Right ventricle myocardium superior (tissue), 1 donor: ENCODE measurements at regions of chr2 and their contacts with region 1.

Region 1: GRCh38 chr2:156589381-156590079 is 153.4 kb downstream of the GPD2 start:
- DNase-seq: no peak
- ATAC-seq: peak; percentile 72

Region 2: GRCh38 chr2:156192468-156192867 is 397.1 kb before region 1 on chr2:
- intact Hi-C with region 1: loop called (anchors 10 kb)
- DNase-seq: no peak
- ATAC-seq: no peak

Region 3: GRCh38 chr2:156486147-156486546 is 103.4 kb before region 1 on chr2:
- intact Hi-C with region 1: no loop called
- DNase-seq: no peak
- ATAC-seq: no peak